ENCODE measurements at regions of chr1 and their contacts with region 1.

Region 1: GRCh38 chr1:25232027-25232865 is at the start of gene SYF2:
- DNase-seq: peak; percentile 92 to 98 (median 94)
- ATAC-seq: peak; percentile 84
- H3K4me3 ChIP-seq: peak within 1 kb of the TSS; percentile 83
- H3K27ac ChIP-seq: peak within 1 kb of the TSS; percentile 98
- H3K4me1 ChIP-seq: peaks cover 23 to 35% of the 10 kb centered on the region in 2 experiments
- H3K27me3 ChIP-seq: no peaks in the 10 kb centered on the region
- CTCF ChIP-seq: no peak
- EP300 ChIP-seq: no peak
- POLR2A ChIP-seq: peak; percentile 94
- RAD21 ChIP-seq: no peak
- polyA plus RNA-seq, gene SYF2: 20.9 to 21.9 TPM

Region 2: DNA sequence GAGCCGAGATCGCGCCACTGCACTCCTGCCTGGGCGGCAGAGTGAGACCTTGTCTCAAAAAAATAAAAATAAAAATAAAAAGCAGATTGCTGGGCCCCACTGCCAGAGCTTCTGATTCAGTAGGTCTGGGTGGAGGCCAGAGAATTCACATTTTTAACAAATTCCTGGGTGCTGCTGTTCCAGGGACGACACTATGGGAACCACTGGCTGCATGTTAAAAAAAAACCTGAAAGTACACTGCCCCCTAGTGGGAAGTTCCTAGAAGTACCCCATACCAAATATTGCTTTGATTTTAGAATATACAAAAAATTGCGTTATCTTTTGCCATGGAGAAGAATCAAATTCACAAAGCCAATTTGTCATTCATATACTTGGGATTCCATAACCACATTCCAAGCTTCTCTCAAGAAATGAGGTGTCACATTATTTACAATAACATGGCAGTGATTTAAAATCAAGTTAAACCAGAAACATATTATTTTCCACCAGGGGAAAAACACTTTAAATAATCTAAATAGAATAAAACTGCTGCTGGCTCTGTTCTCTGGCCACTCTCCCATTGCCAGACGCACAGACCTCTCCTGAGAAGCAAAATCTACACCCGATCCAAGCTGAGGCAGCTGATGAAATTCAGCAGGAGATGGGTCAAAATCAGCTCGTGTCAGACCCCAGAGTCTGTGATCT is 27.3 kb before region 1 on chr1:
- CTCF ChIA-PET with region 1: no interaction called
- POLR2A ChIA-PET with region 1: interaction called, 20 read pairs
- in situ Hi-C with region 1: no loop called
- intact Hi-C with region 1: no loop called
- DNase-seq: peak; percentile 65 to 77 (median 74)
- ATAC-seq: peak; percentile 84
- H3K4me3 ChIP-seq: no peak overlapping the region
- H3K27ac ChIP-seq: no peak overlapping the region
- H3K4me1 ChIP-seq: no peaks in the 10 kb centered on the region
- H3K27me3 ChIP-seq: peaks cover 21 to 25% of the 10 kb centered on the region in 2 experiments; a peak in 4 of 5 replicates
- CTCF ChIP-seq: peak; percentile 64 to 88 (median 79)
- EP300 ChIP-seq: no peak
- POLR2A ChIP-seq: no peak
- RAD21 ChIP-seq: peak; percentile 43 to 71; a peak in 3 of 4 replicates

Region 3: GRCh38 chr1:25217598-25218232 is 14.5 kb before region 1 on chr1:
- CTCF ChIA-PET with region 1: interaction called, 5 read pairs
- POLR2A ChIA-PET with region 1: interaction called, 113 read pairs
- in situ Hi-C with region 1: no loop called
- intact Hi-C with region 1: no loop called
- DNase-seq: no peak
- ATAC-seq: peak; percentile 38
- H3K4me3 ChIP-seq: no peak overlapping the region
- H3K27ac ChIP-seq: no peak overlapping the region
- H3K4me1 ChIP-seq: peaks cover 18 to 19% of the 10 kb centered on the region in 2 experiments
- H3K27me3 ChIP-seq: no peaks in the 10 kb centered on the region
- CTCF ChIP-seq: peak in 1 of 3 experiments; percentile 18; a peak in 2 of 6 replicates
- EP300 ChIP-seq: no peak
- POLR2A ChIP-seq: no peak
- RAD21 ChIP-seq: peak in 1 of 2 experiments; percentile 22; a peak in 2 of 4 replicates

Region 4: DNA sequence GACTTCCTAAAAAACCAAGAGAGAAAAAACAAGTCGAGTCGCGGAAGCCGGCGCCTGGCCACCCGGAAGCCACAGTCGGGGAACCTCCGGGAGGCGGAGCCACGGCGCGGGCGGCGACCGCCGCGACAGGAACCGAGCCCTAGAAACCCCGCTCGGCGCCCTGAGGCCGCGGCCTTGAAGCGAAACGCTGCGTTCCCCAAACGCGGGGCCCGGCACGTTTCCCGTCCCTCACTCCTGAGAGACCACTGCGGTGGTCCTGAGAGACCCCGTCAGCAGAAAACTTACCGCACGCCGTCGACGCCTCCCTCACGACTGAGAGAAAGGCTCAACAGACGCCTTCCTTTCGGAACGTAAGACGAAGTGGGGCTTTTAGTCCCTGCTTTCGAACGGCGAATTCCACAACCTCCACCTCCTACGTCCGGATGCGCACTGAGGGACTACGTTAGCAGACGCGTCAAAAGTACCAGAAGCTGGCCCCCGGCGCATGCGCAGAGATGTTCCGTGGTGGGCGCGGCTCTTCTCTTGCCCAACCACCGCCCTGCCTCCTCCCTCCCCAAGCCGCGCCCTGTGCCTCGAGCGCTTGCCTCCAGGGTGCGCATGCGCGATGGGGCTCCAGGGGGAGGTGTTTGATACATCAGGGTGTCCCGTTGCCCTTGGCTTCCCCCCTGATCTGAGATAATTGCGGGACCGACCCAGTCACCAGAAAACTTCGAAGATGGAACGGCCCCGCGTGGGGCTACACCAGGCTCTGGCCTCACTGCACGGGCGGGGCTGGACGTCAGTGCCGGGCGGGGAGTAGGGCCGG is 15.0 kb after region 1 on chr1 and contains the start of gene RSRP1:
- CTCF ChIA-PET with region 1: no interaction called
- POLR2A ChIA-PET with region 1: interaction called, 107 read pairs
- in situ Hi-C with region 1: no loop called
- intact Hi-C with region 1: no loop called
- DNase-seq: peak; percentile 100
- ATAC-seq: peak; percentile 90
- H3K4me3 ChIP-seq: peak within 1 kb of the TSS; percentile 69
- H3K27ac ChIP-seq: peak within 1 kb of the TSS; percentile 93
- H3K4me1 ChIP-seq: peaks cover 21 to 32% of the 10 kb centered on the region in 2 experiments
- H3K27me3 ChIP-seq: no peaks in the 10 kb centered on the region
- CTCF ChIP-seq: no peak
- EP300 ChIP-seq: no peak; the same call in 1 of the 2 replicates
- POLR2A ChIP-seq: peak; percentile 100
- RAD21 ChIP-seq: peak in 1 of 2 experiments; percentile 25; a peak in 2 of 4 replicates
- polyA plus RNA-seq, gene RSRP1: 27.2 to 35.0 TPM